HepG2 (cell line): ENCODE measurements at regions of chr7 and their contacts with region 1.

Region 1: DNA sequence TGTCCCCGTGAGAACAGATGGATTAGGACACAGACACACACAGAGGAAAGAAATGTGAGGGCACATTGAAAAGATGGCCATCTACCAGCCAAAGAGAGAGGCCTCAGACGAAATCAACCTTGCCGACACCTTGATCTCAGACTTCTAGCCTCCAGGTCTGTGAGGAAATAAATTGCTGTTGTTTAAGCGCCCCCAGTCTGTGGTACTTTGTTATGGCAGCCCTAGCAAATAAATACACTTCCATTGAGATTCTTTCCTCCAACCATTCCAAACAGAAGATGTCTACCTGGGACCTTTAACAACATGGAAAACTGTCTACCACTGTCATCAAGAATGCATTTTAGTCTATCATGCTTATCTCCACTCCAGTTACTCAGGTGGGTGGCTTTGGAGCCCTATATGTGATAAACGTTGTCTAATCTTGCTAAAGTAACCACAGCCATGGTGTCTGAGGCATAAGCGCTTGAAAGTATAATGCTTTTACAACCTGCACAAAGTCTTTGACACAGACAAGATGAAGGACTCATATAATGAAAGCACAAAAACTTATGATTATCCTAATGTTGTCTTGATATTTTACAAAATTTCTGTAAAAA is 244.3 kb downstream of the MTERF1 start:
- DNase-seq: peak; percentile 35
- ATAC-seq: peak; percentile 77
- H3K4me3 ChIP-seq: no peak overlapping the region
- H3K27ac ChIP-seq: no peak overlapping the region
- H3K4me1 ChIP-seq: no peaks in the 10 kb centered on the region
- H3K27me3 ChIP-seq: no peaks in the 10 kb centered on the region
- CTCF ChIP-seq: peak; percentile 78
- EP300 ChIP-seq: no peak
- POLR2A ChIP-seq: no peak
- RAD21 ChIP-seq: peak; percentile 71

Region 2: DNA sequence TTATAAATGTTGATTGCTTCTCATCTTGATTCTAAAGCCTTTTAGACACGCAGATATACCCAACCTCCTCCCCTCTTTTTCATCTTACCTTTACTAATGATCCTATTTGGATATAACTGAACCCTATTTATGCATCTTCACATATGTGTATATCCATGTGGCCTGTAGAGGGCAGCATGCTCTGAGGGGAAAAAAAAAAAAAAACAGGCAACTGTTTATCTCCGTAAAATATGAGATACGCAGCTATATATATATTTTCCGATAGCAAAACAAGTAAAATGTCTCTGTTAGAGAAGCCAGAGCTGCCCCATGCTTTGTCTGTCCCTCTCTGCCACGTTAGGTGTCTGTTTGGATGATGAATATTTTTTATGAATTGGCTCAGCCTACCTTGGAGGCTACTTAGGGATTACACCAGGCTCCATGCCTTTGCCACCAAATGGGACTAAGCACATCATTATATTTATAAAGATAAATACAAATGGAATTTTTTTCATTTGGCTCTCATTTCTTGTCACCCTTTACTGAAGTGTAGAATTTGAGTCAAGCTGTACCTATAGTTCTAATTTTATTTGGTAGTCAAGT is 546.8 kb before region 1 on chr7:
- CTCF ChIA-PET with region 1: interaction called, 6 read pairs
- POLR2A ChIA-PET with region 1: no interaction called
- in situ Hi-C with region 1: loop called (anchors 5 kb)
- intact Hi-C with region 1: loop called (anchors 1 kb)
- DNase-seq: peak; percentile 16
- ATAC-seq: peak; percentile 69
- H3K4me3 ChIP-seq: no peak overlapping the region
- H3K27ac ChIP-seq: no peak overlapping the region
- H3K4me1 ChIP-seq: no peaks in the 10 kb centered on the region
- H3K27me3 ChIP-seq: no peaks in the 10 kb centered on the region
- CTCF ChIP-seq: peak; percentile 59
- EP300 ChIP-seq: no peak
- POLR2A ChIP-seq: no peak
- RAD21 ChIP-seq: no peak

Region 3: DNA sequence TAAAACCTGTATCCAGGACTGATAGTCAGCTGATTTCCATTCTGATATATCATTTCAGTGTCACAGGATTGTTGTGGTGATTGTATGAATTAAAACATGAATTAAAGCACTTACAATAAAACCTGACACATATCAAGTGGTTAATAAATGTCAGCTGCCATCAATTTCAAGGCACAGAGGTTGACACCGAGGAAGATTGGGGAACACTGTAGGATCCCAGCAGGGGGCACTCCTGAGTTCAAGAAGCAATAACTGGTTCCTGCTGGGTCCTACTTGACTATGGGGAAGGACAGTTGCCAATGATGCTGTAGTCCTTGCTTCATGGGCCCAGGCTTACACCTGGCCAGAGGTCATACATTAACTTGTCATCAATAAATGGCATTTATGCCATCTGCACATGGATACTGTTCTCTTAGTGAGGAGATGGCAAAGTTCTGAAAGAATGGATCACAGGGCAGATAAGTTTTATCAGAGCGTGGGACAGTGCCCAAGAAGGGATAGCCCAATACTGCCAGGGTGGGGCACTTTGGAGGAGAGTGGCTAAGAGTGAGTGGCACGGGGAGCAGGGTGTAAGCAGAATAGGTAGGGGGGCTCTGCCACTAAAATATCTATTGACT is 347.9 kb before region 1 on chr7:
- CTCF ChIA-PET with region 1: interaction called, 3 read pairs
- POLR2A ChIA-PET with region 1: no interaction called
- in situ Hi-C with region 1: loop called (anchors 5 kb)
- intact Hi-C with region 1: loop called (anchors 1 kb)
- DNase-seq: peak; percentile 16
- ATAC-seq: peak; percentile 72
- H3K4me3 ChIP-seq: no peak overlapping the region
- H3K27ac ChIP-seq: no peak overlapping the region
- H3K4me1 ChIP-seq: no peaks in the 10 kb centered on the region
- H3K27me3 ChIP-seq: no peaks in the 10 kb centered on the region
- CTCF ChIP-seq: peak; percentile 62
- EP300 ChIP-seq: no peak
- POLR2A ChIP-seq: no peak
- RAD21 ChIP-seq: peak; percentile 13; the same call in 1 of the 2 replicates

Region 4: DNA sequence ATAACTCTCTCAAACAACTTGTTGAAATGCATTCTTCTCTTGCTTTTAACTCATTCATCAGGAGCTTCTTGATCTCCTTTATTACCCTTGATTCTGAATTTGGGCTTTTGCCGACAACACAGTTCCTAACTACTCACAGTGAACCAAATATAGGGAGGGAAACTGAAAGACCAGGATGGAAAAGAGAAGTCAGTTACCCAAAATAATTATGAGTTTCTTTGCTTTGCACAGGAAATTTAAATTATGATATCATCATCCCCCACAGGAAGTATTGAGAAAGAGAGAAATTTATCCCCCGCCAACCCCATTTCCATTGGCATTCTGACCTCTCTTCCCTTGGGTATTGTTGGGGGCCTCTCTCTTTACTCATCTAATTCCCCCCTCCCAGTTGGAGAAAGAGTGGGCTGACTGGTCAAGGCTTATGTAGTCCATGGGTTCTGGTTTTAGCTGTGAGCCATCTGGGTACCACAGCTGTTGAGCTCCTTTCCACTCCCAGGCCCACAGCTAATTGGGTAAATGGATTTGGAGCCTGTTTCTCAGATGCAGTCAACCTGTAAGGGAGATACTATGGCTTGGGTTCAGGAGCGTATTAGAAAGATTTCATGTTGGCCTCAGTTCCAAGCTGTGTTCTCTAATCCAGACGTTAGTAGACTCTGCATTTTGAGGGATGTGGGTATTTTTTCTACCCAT is 263.0 kb before region 1 on chr7:
- CTCF ChIA-PET with region 1: no interaction called
- POLR2A ChIA-PET with region 1: no interaction called
- in situ Hi-C with region 1: no loop called
- intact Hi-C with region 1: loop called (anchors 10 kb)
- DNase-seq: no peak
- ATAC-seq: no peak
- H3K4me3 ChIP-seq: no peak overlapping the region
- H3K27ac ChIP-seq: no peak overlapping the region
- H3K4me1 ChIP-seq: peaks cover 6% of the 10 kb centered on the region; the same call in 1 of the 2 replicates
- H3K27me3 ChIP-seq: no peaks in the 10 kb centered on the region
- CTCF ChIP-seq: no peak
- EP300 ChIP-seq: no peak
- POLR2A ChIP-seq: no peak
- RAD21 ChIP-seq: no peak

Region 5: DNA sequence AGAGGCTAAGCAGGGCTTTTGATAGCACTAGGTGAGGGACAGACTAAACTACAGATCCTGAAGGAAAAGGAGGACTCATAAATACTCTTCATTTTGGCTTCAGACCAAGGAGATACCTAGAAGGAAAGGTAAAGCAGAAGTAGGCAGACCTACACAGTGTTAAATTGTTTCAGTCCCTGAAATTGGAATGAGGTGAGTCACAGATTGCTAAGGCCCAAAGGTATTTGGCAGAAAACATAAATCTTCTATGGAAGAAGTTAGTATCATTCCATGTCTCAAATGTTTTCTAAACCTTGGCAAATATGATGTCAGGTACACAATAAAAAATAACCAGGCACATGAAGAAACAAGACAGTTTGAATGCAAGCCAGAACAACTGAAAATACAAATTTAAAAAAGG is 214.2 kb after region 1 on chr7:
- CTCF ChIA-PET with region 1: no interaction called
- POLR2A ChIA-PET with region 1: no interaction called
- in situ Hi-C with region 1: no loop called
- intact Hi-C with region 1: loop called (anchors 2 kb)
- DNase-seq: no peak
- ATAC-seq: no peak
- H3K4me3 ChIP-seq: no peak overlapping the region
- H3K27ac ChIP-seq: no peak overlapping the region
- H3K4me1 ChIP-seq: peaks cover 9% of the 10 kb centered on the region
- H3K27me3 ChIP-seq: no peaks in the 10 kb centered on the region
- CTCF ChIP-seq: no peak
- EP300 ChIP-seq: no peak
- POLR2A ChIP-seq: no peak
- RAD21 ChIP-seq: no peak

Region 6: DNA sequence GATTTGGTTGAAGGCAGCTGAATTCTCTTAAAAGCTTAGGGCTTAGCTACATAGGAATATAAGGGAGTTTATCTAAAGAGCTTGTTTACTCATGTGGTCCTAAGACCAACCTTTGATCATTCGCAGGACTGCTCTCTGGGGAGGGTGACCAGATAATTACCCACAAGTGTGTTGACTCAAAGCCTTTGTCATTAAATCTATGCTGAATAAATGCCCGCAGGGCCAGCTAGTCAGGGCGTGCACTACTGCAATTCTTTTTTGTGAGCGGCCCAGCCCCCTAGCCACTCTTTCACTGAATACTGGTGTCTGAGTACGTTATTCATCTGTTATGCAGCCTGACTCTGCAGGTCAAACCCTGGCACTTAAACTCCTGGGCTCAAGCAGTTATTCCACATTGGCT is 374.0 kb after region 1 on chr7:
- CTCF ChIA-PET with region 1: no interaction called
- POLR2A ChIA-PET with region 1: no interaction called
- in situ Hi-C with region 1: no loop called
- intact Hi-C with region 1: no loop called
- DNase-seq: peak; percentile 61
- ATAC-seq: peak; percentile 34; the same call in 2 of the 3 replicates
- H3K4me3 ChIP-seq: no peak overlapping the region
- H3K27ac ChIP-seq: no peak overlapping the region
- H3K4me1 ChIP-seq: no peaks in the 10 kb centered on the region
- H3K27me3 ChIP-seq: no peaks in the 10 kb centered on the region
- CTCF ChIP-seq: no peak
- EP300 ChIP-seq: no peak
- POLR2A ChIP-seq: no peak
- RAD21 ChIP-seq: no peak